Posterior vena cava (tissue), 2 donors: ENCODE measurements at regions of chr3 and their contacts with region 1.

Region 1: GRCh38 chr3:77147836-77148578 is 108.1 kb downstream of the ROBO2 start:
- DNase-seq: no peak

Region 2: DNA sequence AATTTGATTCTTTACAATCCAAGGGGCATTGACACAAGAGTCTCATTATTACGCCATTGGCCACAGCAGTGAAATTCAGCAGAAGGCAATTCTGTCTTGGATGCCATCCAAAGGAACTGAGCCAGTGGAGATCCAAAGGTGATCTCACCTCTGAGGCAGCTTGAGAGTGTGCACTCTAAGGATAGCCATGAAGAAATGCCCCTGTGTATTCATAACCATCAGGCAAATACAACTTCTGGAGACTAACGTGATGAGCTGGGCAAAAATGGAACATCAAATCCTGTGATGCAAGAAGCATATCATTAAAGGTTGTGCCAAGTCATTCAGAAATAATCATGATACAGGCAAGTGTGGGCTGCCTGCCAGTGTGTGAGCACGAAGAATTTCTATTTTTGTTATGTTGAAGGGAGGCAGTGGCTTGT is 66.8 kb before region 1 on chr3:
- intact Hi-C with region 1: no loop called
- DNase-seq: no peak

Region 3: GRCh38 chr3:77134769-77135168 is 13.2 kb before region 1 on chr3:
- intact Hi-C with region 1: loop called in 1 of 2 experiments (anchors 1 kb)
- DNase-seq: no peak